Mucosa of descending colon (tissue), 3 donors: ENCODE measurements at regions of chr9 and their contacts with region 1.

Region 1: DNA sequence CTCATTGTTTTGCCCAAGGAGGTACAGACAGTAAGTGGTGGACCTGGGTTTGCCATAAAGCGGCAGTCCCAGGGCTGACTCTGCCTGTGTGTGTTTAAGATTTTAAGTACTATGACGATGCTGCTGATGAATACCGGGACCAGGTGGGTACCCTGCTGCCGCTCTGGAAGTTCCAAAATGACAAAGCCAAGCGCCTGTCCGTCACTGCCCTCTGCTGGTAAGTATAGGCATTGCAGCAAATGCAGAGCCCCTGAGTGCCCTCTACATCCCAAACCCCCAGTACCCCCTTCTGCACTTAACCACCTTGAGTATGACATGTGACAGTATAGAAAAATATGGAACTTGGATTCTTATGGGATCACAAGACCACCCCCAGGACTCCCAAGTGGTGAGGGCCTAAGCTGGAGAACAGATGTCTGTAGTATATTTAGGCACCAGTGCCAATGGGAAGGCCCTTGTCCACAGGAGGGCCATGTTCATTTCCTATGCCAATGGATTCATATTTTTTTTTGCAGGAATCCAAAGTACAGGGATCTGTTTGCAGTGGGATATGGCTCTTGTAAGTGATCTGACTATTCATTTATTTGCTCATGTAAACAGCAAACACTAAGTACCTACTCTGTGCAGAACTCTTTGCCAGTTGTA is 22.0 kb downstream of the ENHO start:
- DNase-seq: peak in 2 of 3 donors; percentile 53 to 71
- ATAC-seq: peak; percentile 70
- H3K4me3 ChIP-seq: no peak overlapping the region
- H3K4me1 ChIP-seq: no peaks in the 10 kb centered on the region
- CTCF ChIP-seq: peak; percentile 95

Region 2: GRCh38 chr9:34233672-34234071 is 267.1 kb before region 1 on chr9:
- intact Hi-C with region 1: no loop called
- DNase-seq: no peak
- ATAC-seq: no peak
- H3K4me3 ChIP-seq: no peak overlapping the region
- H3K4me1 ChIP-seq: no peaks in the 10 kb centered on the region
- CTCF ChIP-seq: no peak

Region 3: DNA sequence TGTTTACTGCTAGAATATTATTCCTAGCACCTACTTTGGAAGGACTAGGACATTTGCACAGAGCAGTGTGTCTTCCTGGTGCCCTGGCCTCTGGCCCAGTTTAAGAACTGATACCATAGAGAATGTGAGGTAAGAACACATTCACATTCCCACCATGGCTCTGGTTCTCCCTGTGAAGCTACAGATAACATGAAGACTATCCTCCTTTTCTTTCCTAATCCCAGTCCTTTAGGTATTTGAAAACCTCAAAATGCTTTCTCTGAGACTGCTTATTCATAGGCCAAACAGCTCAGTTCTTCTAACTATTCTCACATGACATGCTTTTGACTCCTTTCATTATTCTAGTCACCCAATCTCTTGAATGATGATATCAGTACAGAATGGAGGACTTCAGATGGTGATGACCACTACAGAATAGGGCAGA is 54.3 kb before region 1 on chr9:
- intact Hi-C with region 1: loop called in 1 of 2 experiments (anchors 10 kb)
- DNase-seq: no peak
- ATAC-seq: no peak
- H3K4me3 ChIP-seq: no peak overlapping the region
- H3K4me1 ChIP-seq: no peaks in the 10 kb centered on the region
- CTCF ChIP-seq: no peak

Region 4: GRCh38 chr9:34611829-34612630 is 111.3 kb after region 1 on chr9 and contains the start of gene RPP25L:
- intact Hi-C with region 1: no loop called
- DNase-seq: peak; percentile 85 to 94 (median 90)
- ATAC-seq: peak; percentile 95
- H3K4me3 ChIP-seq: peak within 1 kb of the TSS; percentile 48
- H3K4me1 ChIP-seq: peaks cover 4% of the 10 kb centered on the region
- CTCF ChIP-seq: no peak
- total RNA-seq, gene RPP25L: 29.4 to 47.2 (median 39.4) TPM